HepG2 (cell line): ENCODE measurements at regions of chr6 and their contacts with region 1.

Region 1: DNA sequence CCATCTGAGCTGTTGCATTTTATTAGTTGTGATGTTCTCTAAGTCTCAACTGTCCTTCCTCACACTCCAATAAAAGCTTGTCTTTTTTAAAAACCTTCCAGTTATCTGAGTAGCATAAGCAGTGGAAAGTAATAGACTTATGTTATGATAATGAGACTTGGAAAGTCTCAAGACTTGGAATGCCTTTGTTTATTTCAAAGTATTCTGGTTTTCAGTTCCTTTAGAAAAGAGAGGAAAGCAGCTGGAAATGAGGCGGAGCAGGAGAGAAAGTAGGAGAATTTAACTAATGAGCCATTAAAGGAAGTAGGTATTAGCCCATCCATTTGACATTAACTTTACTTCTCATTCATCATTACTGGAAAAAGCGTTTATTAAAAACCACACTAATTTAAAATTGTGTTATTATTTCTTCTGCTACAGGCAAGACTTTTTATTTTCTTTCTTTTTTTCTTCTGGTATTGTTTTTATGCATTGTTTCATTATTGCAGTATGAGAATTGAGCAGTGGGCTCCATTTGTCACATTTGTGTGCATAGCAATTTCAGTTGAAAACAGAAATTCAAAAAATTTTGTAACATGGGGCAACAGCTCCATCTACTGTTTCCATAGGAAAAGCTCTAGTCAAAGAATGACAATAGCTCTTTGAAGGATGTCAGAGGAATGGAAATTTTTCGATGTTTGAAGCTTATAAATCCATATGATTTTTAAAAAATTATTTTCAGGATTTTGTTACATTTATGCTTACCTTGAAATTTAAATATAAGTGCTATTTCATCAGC is 194.8 kb downstream of the COL9A1 start:
- DNase-seq: peak; percentile 19
- ATAC-seq: no peak
- H3K4me3 ChIP-seq: no peak overlapping the region
- H3K27ac ChIP-seq: no peak overlapping the region
- H3K4me1 ChIP-seq: no peaks in the 10 kb centered on the region
- H3K27me3 ChIP-seq: no peaks in the 10 kb centered on the region; a peak in 1 of 5 replicates
- CTCF ChIP-seq: peak; percentile 62
- EP300 ChIP-seq: no peak
- POLR2A ChIP-seq: no peak
- RAD21 ChIP-seq: no peak

Region 2: GRCh38 chr6:68634726-68635411 is 1473.2 kb before region 1 on chr6 and contains the start of gene ADGRB3:
- CTCF ChIA-PET with region 1: interaction called, 3 read pairs
- POLR2A ChIA-PET with region 1: no interaction called
- in situ Hi-C with region 1: loop called (anchors 25 kb)
- intact Hi-C with region 1: loop called (anchors 5 kb)
- DNase-seq: peak; percentile 28
- ATAC-seq: peak; percentile 97
- H3K4me3 ChIP-seq: peak within 1 kb of the TSS; percentile 43 to 76 (median 47)
- H3K27ac ChIP-seq: no peak within 1 kb of the TSS
- H3K4me1 ChIP-seq: peaks cover 13% of the 10 kb centered on the region
- H3K27me3 ChIP-seq: peaks cover 0 to 19% of the 10 kb centered on the region in 2 experiments; a peak in 3 of 5 replicates
- CTCF ChIP-seq: no peak; the same call in 1 of the 2 replicates
- EP300 ChIP-seq: no peak
- POLR2A ChIP-seq: no peak
- RAD21 ChIP-seq: peak; percentile 25; the same call in 1 of the 2 replicates
- total RNA-seq, gene ADGRB3: not detected in 2 replicates

Region 3: GRCh38 chr6:68876792-68877493 is 1231.1 kb before region 1 on chr6:
- CTCF ChIA-PET with region 1: interaction called, 4 read pairs
- POLR2A ChIA-PET with region 1: no interaction called
- in situ Hi-C with region 1: no loop called
- intact Hi-C with region 1: loop called (anchors 2 kb)
- DNase-seq: peak; percentile 3
- ATAC-seq: no peak
- H3K4me3 ChIP-seq: no peak overlapping the region
- H3K27ac ChIP-seq: no peak overlapping the region
- H3K4me1 ChIP-seq: no peaks in the 10 kb centered on the region
- H3K27me3 ChIP-seq: no peaks in the 10 kb centered on the region
- CTCF ChIP-seq: no peak
- EP300 ChIP-seq: no peak
- POLR2A ChIP-seq: no peak
- RAD21 ChIP-seq: no peak

Region 4: DNA sequence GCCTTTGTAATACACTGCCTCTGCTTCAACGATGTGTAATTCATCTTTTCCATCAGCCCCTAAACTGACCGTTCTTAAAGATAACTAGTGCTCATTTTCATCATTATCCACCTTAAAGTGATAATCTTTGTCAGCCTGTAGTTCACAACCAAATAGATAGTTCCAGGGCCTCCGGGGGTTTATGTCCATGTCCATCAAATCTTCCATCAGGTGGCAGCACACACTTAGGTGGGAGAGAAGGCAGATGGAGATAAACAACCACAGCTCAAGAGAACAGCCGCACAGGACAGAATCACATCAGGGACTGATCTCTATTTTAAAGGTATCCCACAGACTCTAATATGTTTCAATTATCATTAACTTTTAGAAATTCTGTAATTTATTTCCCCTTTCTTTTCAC is 402.1 kb before region 1 on chr6:
- CTCF ChIA-PET with region 1: no interaction called
- POLR2A ChIA-PET with region 1: no interaction called
- in situ Hi-C with region 1: no loop called
- intact Hi-C with region 1: loop called (anchors 10 kb)
- DNase-seq: no peak
- ATAC-seq: peak; percentile 62; the same call in 2 of the 3 replicates
- H3K4me3 ChIP-seq: no peak overlapping the region
- H3K27ac ChIP-seq: no peak overlapping the region
- H3K4me1 ChIP-seq: no peaks in the 10 kb centered on the region
- H3K27me3 ChIP-seq: no peaks in the 10 kb centered on the region
- CTCF ChIP-seq: 0 out of 2 replicates have a peak, but pooled peaks have one; percentile 8
- EP300 ChIP-seq: no peak
- POLR2A ChIP-seq: no peak
- RAD21 ChIP-seq: no peak

Region 5: DNA sequence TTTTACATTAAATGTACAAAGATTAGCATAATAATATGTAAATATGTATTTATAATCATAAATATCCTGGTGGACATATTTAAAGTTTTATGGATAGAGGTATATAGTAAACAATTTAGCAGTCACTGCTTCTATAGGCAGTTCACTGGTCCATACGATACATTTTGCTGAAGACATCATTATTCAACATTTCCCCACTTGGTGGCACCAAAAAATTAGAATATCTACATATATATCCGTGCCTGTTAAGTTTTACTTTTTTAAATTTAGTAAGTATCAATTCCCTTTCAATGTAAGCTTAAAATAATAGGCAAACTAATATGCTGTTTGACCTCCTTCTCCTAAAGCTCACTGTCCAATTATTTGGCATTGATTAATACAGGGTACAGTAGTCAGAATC is 375.4 kb before region 1 on chr6:
- CTCF ChIA-PET with region 1: no interaction called
- POLR2A ChIA-PET with region 1: no interaction called
- in situ Hi-C with region 1: loop called (anchors 25 kb)
- intact Hi-C with region 1: no loop called
- DNase-seq: no peak
- ATAC-seq: no peak; the same call in 2 of the 3 replicates
- H3K4me3 ChIP-seq: no peak overlapping the region
- H3K27ac ChIP-seq: no peak overlapping the region
- H3K4me1 ChIP-seq: 0 out of 2 replicates have a peak, but pooled peaks cover 6% of the 10 kb centered on the region
- H3K27me3 ChIP-seq: no peaks in the 10 kb centered on the region
- CTCF ChIP-seq: 0 out of 2 replicates have a peak, but pooled peaks have one; percentile 8
- EP300 ChIP-seq: no peak
- POLR2A ChIP-seq: no peak
- RAD21 ChIP-seq: no peak

Region 6: DNA sequence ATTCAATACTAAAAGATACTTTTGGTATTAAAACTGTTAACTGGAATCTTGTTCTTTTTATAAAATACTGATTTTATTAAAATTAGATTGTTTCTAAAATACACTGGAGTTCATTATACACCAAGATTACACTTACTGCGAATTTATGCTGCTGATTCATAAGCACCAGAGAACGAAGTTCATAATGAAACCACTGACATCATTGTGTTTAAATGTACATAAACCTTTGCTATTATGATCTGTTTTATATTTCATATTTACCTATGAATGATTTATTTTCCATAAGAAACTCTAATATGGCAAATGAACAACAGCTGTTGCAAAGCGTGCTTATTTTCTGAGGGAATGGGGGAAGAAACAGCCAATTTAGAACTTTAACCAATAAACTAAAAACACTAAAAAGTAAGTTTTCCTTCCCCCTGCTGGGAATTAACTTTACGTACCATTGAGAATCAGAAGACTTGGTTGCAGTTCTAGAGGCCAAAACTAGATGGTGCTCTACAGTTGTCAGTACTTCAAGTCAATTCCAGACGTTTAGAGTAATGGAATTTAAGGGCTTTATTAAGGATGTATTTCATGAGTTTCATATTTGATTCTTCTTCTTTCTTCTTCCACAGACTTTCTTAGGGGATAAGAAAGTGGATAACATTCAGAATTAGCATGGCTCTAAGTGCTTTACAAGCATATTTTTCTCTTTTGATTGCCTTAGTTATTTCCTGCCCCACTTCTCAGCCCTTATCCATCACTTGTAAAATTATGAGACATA is 272.4 kb before region 1 on chr6:
- CTCF ChIA-PET with region 1: no interaction called
- POLR2A ChIA-PET with region 1: no interaction called
- in situ Hi-C with region 1: no loop called
- intact Hi-C with region 1: loop called (anchors 2 kb)
- DNase-seq: peak; percentile 41
- ATAC-seq: peak; percentile 75
- H3K4me3 ChIP-seq: no peak overlapping the region
- H3K27ac ChIP-seq: no peak overlapping the region
- H3K4me1 ChIP-seq: no peaks in the 10 kb centered on the region
- H3K27me3 ChIP-seq: no peaks in the 10 kb centered on the region
- CTCF ChIP-seq: peak; percentile 60
- EP300 ChIP-seq: no peak
- POLR2A ChIP-seq: no peak
- RAD21 ChIP-seq: no peak

Region 7: GRCh38 chr6:69953491-69953890 is 154.6 kb before region 1 on chr6:
- CTCF ChIA-PET with region 1: no interaction called
- POLR2A ChIA-PET with region 1: no interaction called
- in situ Hi-C with region 1: no loop called
- intact Hi-C with region 1: no loop called
- DNase-seq: no peak
- ATAC-seq: no peak
- H3K4me3 ChIP-seq: no peak overlapping the region
- H3K27ac ChIP-seq: no peak overlapping the region
- H3K4me1 ChIP-seq: no peaks in the 10 kb centered on the region
- H3K27me3 ChIP-seq: no peaks in the 10 kb centered on the region
- CTCF ChIP-seq: no peak
- EP300 ChIP-seq: no peak
- POLR2A ChIP-seq: no peak
- RAD21 ChIP-seq: no peak

Region 8: DNA sequence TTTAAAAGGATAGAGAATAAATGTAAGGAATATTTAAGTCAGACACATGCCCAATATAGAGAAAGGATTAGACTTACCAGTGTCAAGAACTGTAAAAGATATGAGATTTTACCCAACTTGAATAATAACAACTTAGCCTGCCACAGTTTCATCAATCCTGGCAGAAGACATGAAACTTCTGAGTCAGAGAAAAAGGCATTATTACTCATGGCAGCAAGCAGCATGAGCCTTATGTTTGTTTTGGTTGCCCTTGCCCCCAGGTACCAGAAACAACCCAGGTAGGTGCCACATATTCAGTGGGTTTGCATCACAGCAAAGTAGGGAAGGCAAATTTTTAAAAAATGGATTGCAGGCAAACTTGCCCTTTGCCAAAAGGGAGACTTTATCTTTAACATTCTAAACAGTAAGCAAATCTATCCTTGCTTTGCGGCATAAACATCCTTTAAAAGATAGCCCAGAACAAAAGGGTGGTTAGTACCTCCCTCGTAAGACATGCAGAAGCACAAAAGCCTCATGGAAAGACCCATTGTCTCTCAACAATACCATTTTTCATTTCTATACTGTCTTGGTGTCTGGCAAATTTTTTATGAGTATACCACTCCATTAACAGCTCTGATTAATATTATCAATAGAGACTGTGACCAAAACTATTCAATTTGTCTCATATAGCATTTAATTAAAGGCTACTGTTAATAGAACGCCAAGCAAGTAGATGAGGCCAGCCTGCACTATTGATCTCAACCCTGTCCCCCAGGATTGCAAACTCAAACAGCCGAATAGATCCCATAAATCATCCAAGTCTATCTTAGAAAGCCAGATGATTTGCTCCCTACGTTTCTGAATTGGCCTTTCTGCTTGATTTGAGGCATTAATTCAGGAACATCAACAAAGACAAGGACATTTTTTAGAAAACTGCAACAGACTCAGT is 56.6 kb before region 1 on chr6:
- CTCF ChIA-PET with region 1: no interaction called
- POLR2A ChIA-PET with region 1: no interaction called
- in situ Hi-C with region 1: no loop called
- intact Hi-C with region 1: no loop called
- DNase-seq: no peak
- ATAC-seq: no peak
- H3K4me3 ChIP-seq: no peak overlapping the region
- H3K27ac ChIP-seq: no peak overlapping the region
- H3K4me1 ChIP-seq: no peaks in the 10 kb centered on the region
- H3K27me3 ChIP-seq: no peaks in the 10 kb centered on the region; a peak in 1 of 5 replicates
- CTCF ChIP-seq: no peak
- EP300 ChIP-seq: no peak
- POLR2A ChIP-seq: no peak
- RAD21 ChIP-seq: no peak

Region 9: DNA sequence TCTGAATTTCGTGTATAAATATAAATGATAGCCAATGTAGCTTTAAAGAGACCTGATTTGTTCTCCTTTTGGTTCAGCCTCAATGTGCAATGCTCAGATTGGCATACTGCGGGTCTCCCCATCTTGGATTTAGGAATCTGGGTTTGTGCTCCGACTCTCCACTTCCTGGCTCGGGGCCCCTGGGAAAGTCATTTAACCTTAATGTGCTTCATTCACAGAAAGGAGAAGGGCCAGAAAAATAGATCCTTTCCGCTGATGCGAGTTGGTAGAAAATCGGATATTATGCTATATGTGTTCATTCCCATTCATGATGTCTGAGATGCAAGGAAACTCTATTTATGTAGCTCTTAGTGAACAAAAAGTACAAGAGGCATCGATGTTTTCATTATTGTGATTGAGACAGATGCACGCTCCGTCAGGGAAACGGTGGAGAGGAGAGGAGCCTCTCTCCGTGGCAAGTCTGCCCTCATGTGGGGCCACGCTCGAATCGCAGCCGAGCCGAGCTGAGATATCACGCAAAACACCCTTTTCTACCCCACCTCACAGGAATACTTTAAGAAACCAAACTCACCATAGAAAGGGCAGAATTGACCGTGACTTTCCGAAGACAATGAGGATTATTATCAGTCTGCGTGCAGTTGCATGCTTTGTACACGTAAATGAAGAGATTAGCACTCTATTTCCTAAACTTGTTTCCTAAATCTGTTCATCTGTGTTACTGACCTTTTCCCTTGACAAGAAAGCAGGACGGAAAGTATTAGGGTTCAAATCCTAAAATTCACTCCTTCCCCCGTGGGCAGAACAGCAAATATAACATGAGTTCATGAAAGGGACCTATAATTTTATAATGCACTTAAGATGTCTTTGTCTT is 58.3 kb after region 1 on chr6:
- CTCF ChIA-PET with region 1: no interaction called
- POLR2A ChIA-PET with region 1: no interaction called
- in situ Hi-C with region 1: no loop called
- intact Hi-C with region 1: loop called (anchors 1 kb)
- DNase-seq: peak; percentile 8
- ATAC-seq: peak; percentile 98
- H3K4me3 ChIP-seq: no peak overlapping the region
- H3K27ac ChIP-seq: no peak overlapping the region
- H3K4me1 ChIP-seq: 0 out of 2 replicates have a peak, but pooled peaks cover 5% of the 10 kb centered on the region
- H3K27me3 ChIP-seq: no peaks in the 10 kb centered on the region
- CTCF ChIP-seq: peak; percentile 81
- EP300 ChIP-seq: no peak
- POLR2A ChIP-seq: no peak
- RAD21 ChIP-seq: peak; percentile 41; the same call in 1 of the 2 replicates

Region 10: GRCh38 chr6:70739534-70739933 is 631.5 kb after region 1 on chr6:
- CTCF ChIA-PET with region 1: no interaction called
- POLR2A ChIA-PET with region 1: no interaction called
- in situ Hi-C with region 1: no loop called
- intact Hi-C with region 1: no loop called
- DNase-seq: no peak
- ATAC-seq: no peak
- H3K4me3 ChIP-seq: no peak overlapping the region
- H3K27ac ChIP-seq: no peak overlapping the region
- H3K4me1 ChIP-seq: no peaks in the 10 kb centered on the region
- H3K27me3 ChIP-seq: no peaks in the 10 kb centered on the region
- CTCF ChIP-seq: no peak
- EP300 ChIP-seq: no peak
- POLR2A ChIP-seq: no peak
- RAD21 ChIP-seq: no peak